Activated CD4-positive, alpha-beta memory T cell treated with anti-CD3 and anti-CD28 coated beads, Interleukin-2, amount 10 ng/mL, durations not matched to agents 7 days and 5 days (primary cell): ENCODE measurements at regions of chr19 and their contacts with region 1.

Region 1: GRCh38 chr19:7355151-7355820 is 6.5 kb downstream of the ARHGEF18 start:
- DNase-seq: no peak
- H3K4me3 Mint-ChIP-seq: no peak overlapping the region
- H3K27ac Mint-ChIP-seq: no peak overlapping the region
- H3K4me1 Mint-ChIP-seq: peaks cover 22% of the 10 kb centered on the region
- H3K27me3 Mint-ChIP-seq: no peaks in the 10 kb centered on the region

Region 2: DNA sequence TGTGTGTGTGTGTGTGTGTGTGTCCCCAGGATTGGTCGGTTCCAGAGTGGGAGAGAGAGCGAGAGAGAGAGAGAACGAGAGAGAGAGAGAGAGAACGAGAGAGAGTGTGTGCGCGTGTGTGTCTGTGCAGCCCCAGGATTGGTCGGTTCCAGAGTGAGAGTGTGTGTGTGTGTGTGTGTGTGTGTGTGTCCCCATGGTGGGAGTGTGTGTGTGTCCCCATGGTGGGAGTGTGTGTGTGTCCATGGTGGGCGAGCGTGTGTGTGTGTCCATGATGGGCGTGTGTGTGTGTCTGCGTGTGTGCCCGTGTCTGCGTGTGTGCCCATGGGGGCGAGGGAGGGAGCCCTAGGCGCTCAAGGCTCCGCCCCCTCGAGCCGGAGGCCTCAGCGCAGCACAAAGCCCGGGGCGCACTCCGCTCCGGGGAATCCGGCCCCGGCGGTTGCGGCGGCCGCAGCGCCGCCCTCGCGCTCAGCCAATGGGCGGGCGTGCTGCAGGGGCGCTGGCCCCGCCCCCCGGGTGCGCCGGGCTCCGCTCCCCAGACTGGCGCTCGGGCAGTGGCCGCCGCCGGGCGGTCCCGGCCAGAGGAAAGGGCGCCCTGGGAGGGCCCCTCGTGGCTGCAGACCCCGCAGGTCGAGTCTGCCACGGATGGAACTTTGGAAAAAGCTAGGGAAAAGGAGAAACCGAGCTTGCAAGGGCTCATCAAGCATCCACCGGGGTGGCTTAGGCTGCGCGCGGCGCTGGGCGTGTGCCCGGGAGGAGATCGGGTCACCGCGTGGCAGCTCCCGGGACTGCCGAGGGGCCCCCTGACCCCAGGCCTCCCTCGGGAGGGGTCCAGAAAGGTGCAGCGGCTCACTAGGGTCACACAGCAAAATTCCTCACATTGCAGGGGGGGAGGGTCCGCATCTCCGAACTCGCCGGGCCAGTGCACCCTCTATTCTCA is 157.3 kb before region 1 on chr19:
- CTCF ChIA-PET with region 1: no interaction called
- POLR2A ChIA-PET with region 1: no interaction called
- DNase-seq: peak; percentile 92
- H3K4me3 Mint-ChIP-seq: peak overlapping the region; percentile 73
- H3K27ac Mint-ChIP-seq: peak overlapping the region; percentile 69
- H3K4me1 Mint-ChIP-seq: peaks cover 14% of the 10 kb centered on the region
- H3K27me3 Mint-ChIP-seq: peaks cover 26% of the 10 kb centered on the region

Region 3: GRCh38 chr19:7272856-7273578 is 82.3 kb before region 1 on chr19:
- CTCF ChIA-PET with region 1: no interaction called
- POLR2A ChIA-PET with region 1: no interaction called
- DNase-seq: no peak
- H3K4me3 Mint-ChIP-seq: no peak overlapping the region
- H3K27ac Mint-ChIP-seq: no peak overlapping the region
- H3K4me1 Mint-ChIP-seq: no peaks in the 10 kb centered on the region
- H3K27me3 Mint-ChIP-seq: no peaks in the 10 kb centered on the region

Region 4: GRCh38 chr19:7366701-7367420 is 11.6 kb after region 1 on chr19:
- CTCF ChIA-PET with region 1: interaction called, 36 read pairs
- POLR2A ChIA-PET with region 1: interaction called, 4 read pairs
- DNase-seq: peak; percentile 36
- H3K4me3 Mint-ChIP-seq: no peak overlapping the region
- H3K27ac Mint-ChIP-seq: no peak overlapping the region
- H3K4me1 Mint-ChIP-seq: peaks cover 1% of the 10 kb centered on the region
- H3K27me3 Mint-ChIP-seq: no peaks in the 10 kb centered on the region

Region 5: GRCh38 chr19:7381073-7381390 is 25.7 kb after region 1 on chr19:
- CTCF ChIA-PET with region 1: interaction called, 22 read pairs
- POLR2A ChIA-PET with region 1: interaction called, 3 read pairs
- DNase-seq: no peak
- H3K4me3 Mint-ChIP-seq: no peak overlapping the region
- H3K27ac Mint-ChIP-seq: no peak overlapping the region
- H3K4me1 Mint-ChIP-seq: peaks cover 5% of the 10 kb centered on the region
- H3K27me3 Mint-ChIP-seq: no peaks in the 10 kb centered on the region